Left colon (tissue), 2 donors: ENCODE measurements at regions of chrX and their contacts with region 1.

Region 1: DNA sequence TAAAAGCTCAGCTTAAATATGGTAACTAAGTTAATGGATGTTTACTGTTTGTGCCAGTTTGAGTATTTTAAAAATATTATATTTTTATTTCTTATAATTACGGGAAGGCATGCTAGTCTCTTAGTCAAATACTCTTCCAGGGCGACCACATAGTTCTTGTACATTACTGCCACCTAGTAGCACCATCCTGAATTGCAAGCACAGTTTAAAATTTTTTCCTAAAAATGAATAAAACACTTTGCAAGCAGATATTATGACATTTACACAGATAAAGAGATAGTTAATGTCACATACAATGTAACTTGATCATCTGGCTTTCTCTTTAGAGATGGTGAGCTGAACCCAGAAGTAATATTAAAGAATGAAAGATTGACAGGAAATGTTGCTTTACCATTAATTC is 11.5 kb downstream of the NDP start:
- DNase-seq: no peak
- ATAC-seq: no peak

Region 2: DNA sequence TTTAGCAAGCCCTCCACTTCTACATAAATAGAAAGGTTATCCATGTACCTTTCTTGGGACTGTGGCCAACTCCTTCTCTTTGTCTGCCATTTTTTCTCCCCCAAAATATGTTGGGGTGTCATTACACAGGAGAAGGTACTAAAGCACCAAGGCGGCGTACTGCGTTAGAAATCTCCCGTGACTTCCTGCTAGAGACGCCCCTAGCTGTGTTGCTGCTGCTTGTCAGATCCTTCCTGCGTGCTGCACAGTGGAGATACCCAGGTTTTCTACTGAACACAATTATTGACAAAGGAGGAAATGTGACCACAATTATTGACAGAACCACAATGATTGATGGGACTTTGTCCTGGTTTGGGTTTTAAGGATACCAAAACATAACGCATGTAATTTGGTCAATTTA is 284.0 kb after region 1 on chrX:
- intact Hi-C with region 1: loop called in 1 of 2 experiments (anchors 5 kb)
- DNase-seq: no peak
- ATAC-seq: no peak

Region 3: GRCh38 chrX:44352758-44353157 is 391.1 kb after region 1 on chrX:
- intact Hi-C with region 1: no loop called
- DNase-seq: no peak
- ATAC-seq: no peak

Region 4: GRCh38 chrX:45186643-45187026 is 1224.9 kb after region 1 on chrX:
- intact Hi-C with region 1: loop called in 1 of 2 experiments (anchors 5 kb)
- DNase-seq: no peak
- ATAC-seq: peak; percentile 14